Activated T-helper 1 cell treated with anti-CD3 and anti-CD28 coated beads, Interleukin-12 subunit alpha, Interleukin-12 subunit beta, Interleukin-2, Interleukin-4 antibody, amounts not matched to agents 30 ng/mL and 10 ng/mL and 1 ng/mL, durations not matched to agents 14 hours and 24 hours and 36 hours (primary cell): ENCODE measurements at regions of chr3 and their contacts with region 1.

Region 1: DNA sequence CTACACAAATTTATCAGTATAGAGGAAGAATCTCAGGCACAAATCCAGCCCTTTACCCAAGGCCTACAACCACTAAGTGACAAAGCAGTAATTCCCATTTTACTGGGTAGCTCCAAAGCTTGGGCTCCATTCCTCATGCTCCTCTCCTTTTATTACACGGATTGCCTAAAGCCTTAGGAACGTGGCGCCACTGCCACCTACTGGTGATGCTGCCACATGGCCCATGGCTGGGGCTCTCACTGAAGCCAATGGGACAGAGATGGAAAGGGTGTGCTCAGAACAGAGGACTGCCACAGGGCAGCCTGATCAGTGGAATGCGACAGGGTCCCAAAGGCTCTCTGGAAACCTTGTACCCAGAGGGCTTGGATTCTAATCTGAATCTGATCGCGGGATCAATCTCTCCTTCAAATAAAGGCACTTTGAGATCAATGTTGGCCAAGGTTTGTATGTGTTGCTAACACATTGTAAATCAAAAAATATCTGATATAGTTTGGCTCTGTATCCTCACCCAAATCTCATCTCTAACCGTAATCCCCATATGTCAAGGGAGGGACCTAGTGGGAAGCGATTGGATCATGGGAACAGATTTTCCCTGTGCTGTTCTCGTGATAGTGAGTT is 33.5 kb upstream of the LYZL4 start:
- DNase-seq: peak; percentile 54
- H3K4me3 Mint-ChIP-seq: no peak overlapping the region
- H3K27ac Mint-ChIP-seq: no peak overlapping the region
- H3K4me1 Mint-ChIP-seq: no peaks in the 10 kb centered on the region
- H3K27me3 Mint-ChIP-seq: peaks cover 2% of the 10 kb centered on the region

Region 2: DNA sequence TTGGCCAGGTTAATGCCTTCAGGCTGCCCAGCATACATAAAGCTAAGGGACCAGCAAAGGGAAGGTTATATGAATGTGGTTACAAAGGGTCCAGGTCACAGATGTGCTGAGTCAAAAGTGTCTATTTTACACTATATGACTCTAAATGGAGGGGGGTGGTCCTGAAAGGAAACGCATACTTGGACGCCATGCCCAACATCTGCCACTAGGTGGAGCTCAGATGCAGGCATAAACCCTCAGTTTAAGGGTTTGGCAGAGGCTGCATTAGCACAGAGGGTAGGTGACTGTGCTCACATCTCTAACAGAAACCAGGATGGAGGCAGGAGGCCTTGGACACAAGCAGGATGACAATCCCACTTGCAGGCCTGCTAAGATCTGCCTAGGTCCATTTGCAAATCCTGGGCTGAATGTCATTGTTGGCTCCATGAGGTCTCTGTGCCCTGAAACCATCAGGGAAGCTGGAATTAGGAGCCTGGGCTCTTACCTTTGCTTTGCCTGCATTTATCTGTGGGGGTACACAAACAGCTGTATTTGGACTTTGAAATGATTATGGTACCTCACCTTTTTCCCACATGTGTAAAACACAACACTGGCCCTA is 1863.3 kb before region 1 on chr3:
- intact Hi-C with region 1: loop called (anchors 1 kb)
- DNase-seq: peak; percentile 39
- H3K4me3 Mint-ChIP-seq: no peak overlapping the region
- H3K27ac Mint-ChIP-seq: no peak overlapping the region
- H3K4me1 Mint-ChIP-seq: no peaks in the 10 kb centered on the region
- H3K27me3 Mint-ChIP-seq: peaks cover 4% of the 10 kb centered on the region

Region 3: DNA sequence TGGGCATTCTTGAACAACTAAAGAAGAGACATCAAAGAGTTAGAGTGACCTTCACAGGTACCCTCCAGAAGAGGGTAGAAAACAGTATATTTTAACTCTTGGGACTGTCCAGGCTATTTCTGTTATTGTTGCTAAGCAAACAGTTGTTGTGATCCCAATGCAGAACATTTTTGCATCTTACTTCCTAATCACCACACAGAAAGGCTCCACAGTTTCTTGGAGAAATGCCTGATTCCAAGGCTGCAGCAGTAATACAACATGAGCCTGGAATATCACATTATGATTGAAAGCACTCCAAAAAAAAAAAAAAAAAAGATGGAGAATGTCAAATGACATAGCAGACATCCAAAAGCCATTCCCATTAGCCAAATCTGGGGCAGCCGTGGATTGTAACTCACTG is 1049.0 kb before region 1 on chr3:
- intact Hi-C with region 1: no loop called
- DNase-seq: no peak
- H3K4me3 Mint-ChIP-seq: no peak overlapping the region
- H3K27ac Mint-ChIP-seq: no peak overlapping the region
- H3K4me1 Mint-ChIP-seq: no peaks in the 10 kb centered on the region
- H3K27me3 Mint-ChIP-seq: peaks cover 2% of the 10 kb centered on the region

Region 4: GRCh38 chr3:41893977-41894376 is 550.0 kb before region 1 on chr3:
- intact Hi-C with region 1: loop called (anchors 2 kb)
- DNase-seq: no peak
- H3K4me3 Mint-ChIP-seq: no peak overlapping the region
- H3K27ac Mint-ChIP-seq: no peak overlapping the region
- H3K4me1 Mint-ChIP-seq: no peaks in the 10 kb centered on the region
- H3K27me3 Mint-ChIP-seq: no peaks in the 10 kb centered on the region

Region 5: DNA sequence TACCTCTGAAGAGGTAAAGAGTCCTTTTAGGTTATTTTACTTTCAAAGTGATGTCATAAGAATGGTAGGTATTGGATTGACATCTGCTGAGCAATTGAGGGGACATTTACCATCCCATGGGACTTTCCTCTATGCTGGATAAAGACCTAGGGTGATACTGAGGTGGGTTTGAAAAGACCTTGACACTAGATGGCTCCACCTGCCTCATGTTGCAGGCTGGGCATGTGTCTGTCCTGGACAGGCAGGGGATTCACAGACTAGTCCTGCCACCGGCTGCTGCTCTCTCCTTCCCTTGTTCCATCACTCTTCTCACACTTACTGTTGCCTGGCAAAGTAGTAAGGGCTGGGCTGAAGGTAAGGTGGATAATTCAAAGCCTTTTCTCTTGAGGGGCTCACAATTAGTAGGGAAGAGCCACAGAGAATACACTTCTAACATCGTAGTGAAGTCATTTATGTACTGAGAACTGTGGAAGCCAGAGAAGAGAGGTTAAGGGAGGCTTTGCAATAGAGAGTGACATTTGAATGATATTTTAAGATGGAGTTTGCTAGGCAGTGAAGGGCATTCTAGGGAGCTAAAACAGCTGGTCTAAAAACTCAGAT is 325.1 kb before region 1 on chr3:
- intact Hi-C with region 1: loop called (anchors 1 kb)
- DNase-seq: peak; percentile 4
- H3K4me3 Mint-ChIP-seq: no peak overlapping the region
- H3K27ac Mint-ChIP-seq: no peak overlapping the region
- H3K4me1 Mint-ChIP-seq: peaks cover 32% of the 10 kb centered on the region
- H3K27me3 Mint-ChIP-seq: no peaks in the 10 kb centered on the region

Region 6: GRCh38 chr3:42190701-42191462 is 253.0 kb before region 1 on chr3:
- intact Hi-C with region 1: loop called (anchors 5 kb)
- DNase-seq: peak; percentile 42
- H3K4me3 Mint-ChIP-seq: no peak overlapping the region
- H3K27ac Mint-ChIP-seq: no peak overlapping the region
- H3K4me1 Mint-ChIP-seq: peaks cover 30% of the 10 kb centered on the region
- H3K27me3 Mint-ChIP-seq: no peaks in the 10 kb centered on the region

Region 7: GRCh38 chr3:42229942-42230688 is 213.8 kb before region 1 on chr3:
- intact Hi-C with region 1: loop called (anchors 1 kb)
- DNase-seq: no peak
- H3K4me3 Mint-ChIP-seq: no peak overlapping the region
- H3K27ac Mint-ChIP-seq: no peak overlapping the region
- H3K4me1 Mint-ChIP-seq: no peaks in the 10 kb centered on the region
- H3K27me3 Mint-ChIP-seq: peaks cover 6% of the 10 kb centered on the region

Region 8: DNA sequence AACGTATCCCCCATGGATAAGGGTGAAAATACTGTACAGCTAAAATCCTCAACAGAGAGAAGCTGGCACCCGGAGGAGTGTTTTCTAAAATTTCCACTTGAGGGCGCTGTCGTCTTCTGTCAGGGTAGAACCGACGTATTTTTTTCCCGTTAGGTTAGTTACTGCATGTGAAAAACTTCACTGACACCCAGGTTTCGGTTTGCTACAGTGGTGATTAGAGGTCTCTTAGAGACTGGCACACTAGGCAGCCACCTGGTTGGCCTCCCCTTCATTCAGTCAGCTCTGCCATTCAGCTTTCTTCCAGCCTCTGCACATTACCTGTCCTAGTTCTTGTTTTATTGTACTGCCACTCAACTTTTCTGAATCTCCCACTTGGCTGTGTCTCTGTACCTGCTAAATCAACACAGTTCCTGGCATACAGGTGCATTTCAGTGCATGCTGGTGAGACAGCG is 196.3 kb before region 1 on chr3:
- intact Hi-C with region 1: loop called (anchors 1 kb)
- DNase-seq: peak; percentile 30
- H3K4me3 Mint-ChIP-seq: no peak overlapping the region
- H3K27ac Mint-ChIP-seq: no peak overlapping the region
- H3K4me1 Mint-ChIP-seq: peaks cover 9% of the 10 kb centered on the region
- H3K27me3 Mint-ChIP-seq: peaks cover 33% of the 10 kb centered on the region

Region 9: DNA sequence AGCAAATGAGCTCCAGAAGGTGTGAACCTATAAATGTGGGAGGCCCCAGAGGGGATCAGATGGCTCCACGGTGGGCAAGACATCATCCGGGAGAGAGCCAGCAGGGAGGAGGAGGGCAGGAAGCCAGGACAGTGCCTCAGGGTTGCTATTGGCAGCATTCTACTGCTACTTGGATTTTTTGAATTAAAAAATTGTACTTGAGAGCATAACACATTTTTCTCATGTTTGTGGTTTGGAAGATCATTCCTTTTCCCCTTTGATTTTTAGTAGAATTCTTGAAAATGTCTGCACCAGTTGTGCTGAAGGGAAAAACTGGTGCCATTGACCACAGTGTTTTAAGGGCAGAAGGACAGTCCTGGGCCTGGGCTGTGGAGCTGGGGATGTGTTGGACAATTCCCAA is 92.7 kb before region 1 on chr3:
- intact Hi-C with region 1: no loop called
- DNase-seq: no peak
- H3K4me3 Mint-ChIP-seq: no peak overlapping the region
- H3K27ac Mint-ChIP-seq: no peak overlapping the region
- H3K4me1 Mint-ChIP-seq: no peaks in the 10 kb centered on the region
- H3K27me3 Mint-ChIP-seq: no peaks in the 10 kb centered on the region